OCI-LY7 (cell line): ENCODE measurements at regions of chr6 and their contacts with region 1.

Region 1: DNA sequence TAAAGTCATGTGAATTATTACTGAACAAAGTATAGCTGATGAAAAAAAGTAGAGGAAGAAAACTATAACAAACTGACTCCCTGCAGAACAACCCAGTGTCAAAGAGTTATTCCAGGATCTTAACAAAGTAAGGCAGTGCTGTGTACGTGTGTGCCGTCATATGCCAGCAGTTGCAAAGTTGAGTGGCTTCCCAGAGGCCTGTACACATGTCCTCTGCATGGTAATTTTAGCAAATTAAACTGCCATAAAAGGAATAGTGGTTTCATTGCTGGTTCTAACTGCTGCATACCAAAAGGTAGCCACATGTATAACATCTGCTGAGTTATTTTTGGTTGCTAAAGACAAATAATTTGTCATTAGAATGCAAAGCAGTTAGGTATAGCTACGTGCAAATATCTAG is 44.8 kb downstream of the RIPOR2 start:
- DNase-seq: peak; percentile 80
- H3K4me3 ChIP-seq: peak overlapping the region; percentile 8
- H3K27ac ChIP-seq: peak overlapping the region; percentile 83
- H3K4me1 ChIP-seq: peaks cover 88% of the 10 kb centered on the region
- CTCF ChIP-seq: no peak

Region 2: DNA sequence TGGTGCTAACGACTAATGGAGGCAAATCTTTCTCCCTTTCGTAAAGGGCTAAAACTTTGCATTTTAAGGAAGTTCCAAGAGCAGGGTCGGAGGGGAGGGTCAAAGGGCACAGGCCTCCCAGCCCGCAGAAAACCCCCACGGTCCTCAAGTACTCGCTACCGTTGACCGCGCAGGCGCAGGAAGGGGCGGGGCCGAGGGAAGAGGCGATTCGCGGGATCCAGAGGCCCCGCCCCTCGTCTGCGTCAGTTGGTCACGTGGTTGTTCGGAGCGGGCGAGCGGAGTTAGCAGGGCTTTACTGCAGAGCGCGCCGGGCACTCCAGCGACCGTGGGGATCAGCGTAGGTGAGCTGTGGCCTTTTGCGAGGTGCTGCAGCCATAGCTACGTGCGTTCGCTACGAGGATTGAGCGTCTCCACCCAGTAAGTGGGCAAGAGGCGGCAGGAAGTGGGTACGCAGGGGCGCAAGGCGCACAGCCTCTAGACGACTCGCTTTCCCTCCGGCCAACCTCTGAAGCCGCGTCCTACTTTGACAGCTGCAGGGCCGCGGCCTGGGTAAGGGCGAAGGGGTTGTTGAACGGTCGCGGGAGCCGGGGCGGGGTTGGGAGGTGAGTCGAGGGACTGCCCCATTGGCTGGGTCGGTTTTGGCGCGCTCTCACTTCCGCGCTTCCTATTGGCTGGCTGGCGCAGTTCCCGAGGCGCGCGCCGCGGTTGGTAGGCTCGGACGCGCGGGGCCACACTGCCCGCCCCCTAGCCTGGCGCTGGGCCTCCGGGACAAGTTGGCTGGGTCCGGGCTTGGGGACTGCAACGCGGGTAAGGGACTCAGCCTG is 116.1 kb before region 1 on chr6 and contains the start of gene GMNN:
- CTCF ChIA-PET with region 1: no interaction called
- POLR2A ChIA-PET with region 1: no interaction called
- intact Hi-C with region 1: no loop called
- DNase-seq: peak; percentile 98
- H3K4me3 ChIP-seq: peak within 1 kb of the TSS; percentile 95
- H3K27ac ChIP-seq: peak within 1 kb of the TSS; percentile 94
- H3K4me1 ChIP-seq: peaks cover 36% of the 10 kb centered on the region
- CTCF ChIP-seq: no peak
- total RNA-seq, gene GMNN: 101 and 130 TPM in 2 replicates

Region 3: GRCh38 chr6:24876499-24877465 is 14.2 kb before region 1 on chr6:
- CTCF ChIA-PET with region 1: no interaction called
- POLR2A ChIA-PET with region 1: interaction called, 10 read pairs
- intact Hi-C with region 1: no loop called
- DNase-seq: no peak
- H3K4me3 ChIP-seq: no peak overlapping the region
- H3K27ac ChIP-seq: no peak overlapping the region
- H3K4me1 ChIP-seq: peaks cover 36% of the 10 kb centered on the region
- CTCF ChIP-seq: no peak

Region 4: GRCh38 chr6:24902782-24903181 is 11.8 kb after region 1 on chr6:
- CTCF ChIA-PET with region 1: interaction called, 4 read pairs
- POLR2A ChIA-PET with region 1: interaction called, 54 read pairs
- intact Hi-C with region 1: no loop called
- DNase-seq: no peak
- H3K4me3 ChIP-seq: no peak overlapping the region
- H3K27ac ChIP-seq: peak overlapping the region; percentile 64
- H3K4me1 ChIP-seq: peaks cover 79% of the 10 kb centered on the region
- CTCF ChIP-seq: no peak

Region 5: DNA sequence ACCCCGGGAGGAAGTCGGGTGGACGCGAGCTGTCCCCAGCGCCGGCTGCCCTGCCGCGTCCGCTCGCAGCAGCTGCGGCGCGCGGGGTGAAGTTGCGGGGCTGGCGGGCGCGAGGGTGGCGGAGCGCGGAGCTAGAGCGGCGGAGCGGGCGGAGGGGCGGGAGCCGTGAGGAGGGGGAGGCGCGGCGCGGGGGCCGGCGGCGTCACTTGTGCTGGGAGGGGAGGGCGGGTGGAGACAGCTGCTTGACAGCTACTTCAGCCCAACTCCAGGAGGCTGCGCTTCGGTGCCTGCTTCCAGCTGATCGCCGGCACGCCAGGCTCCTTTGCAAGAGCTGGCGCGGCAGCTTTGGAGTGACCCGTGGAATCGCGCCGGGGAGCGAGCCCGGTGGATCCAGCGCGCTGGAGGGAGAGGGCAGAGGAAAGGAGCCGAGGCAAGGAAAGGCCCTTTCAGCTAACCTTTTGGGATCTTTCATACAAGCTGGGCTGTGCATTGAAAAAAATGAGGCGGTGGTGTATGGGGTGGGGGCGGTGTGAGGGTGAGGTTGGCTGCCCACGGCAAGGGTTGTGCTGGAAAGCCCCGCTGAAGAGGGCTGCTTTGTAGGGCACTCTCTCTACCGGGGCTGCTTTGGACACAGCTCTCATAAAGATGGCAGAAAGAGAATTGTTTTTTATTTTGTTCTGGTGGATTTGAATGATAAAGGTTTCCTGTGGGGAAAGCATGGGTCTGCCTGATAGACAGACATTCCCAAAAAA is 20.1 kb after region 1 on chr6:
- CTCF ChIA-PET with region 1: interaction called, 11 read pairs
- POLR2A ChIA-PET with region 1: interaction called, 22 read pairs
- intact Hi-C with region 1: loop called (anchors 2 kb)
- DNase-seq: peak; percentile 62
- H3K4me3 ChIP-seq: peak overlapping the region; percentile 75
- H3K27ac ChIP-seq: peak overlapping the region; percentile 95
- H3K4me1 ChIP-seq: peaks cover 75% of the 10 kb centered on the region
- CTCF ChIP-seq: no peak